HCT116 (cell line): ENCODE measurements at regions of chr4 and their contacts with region 1.

Region 1: DNA sequence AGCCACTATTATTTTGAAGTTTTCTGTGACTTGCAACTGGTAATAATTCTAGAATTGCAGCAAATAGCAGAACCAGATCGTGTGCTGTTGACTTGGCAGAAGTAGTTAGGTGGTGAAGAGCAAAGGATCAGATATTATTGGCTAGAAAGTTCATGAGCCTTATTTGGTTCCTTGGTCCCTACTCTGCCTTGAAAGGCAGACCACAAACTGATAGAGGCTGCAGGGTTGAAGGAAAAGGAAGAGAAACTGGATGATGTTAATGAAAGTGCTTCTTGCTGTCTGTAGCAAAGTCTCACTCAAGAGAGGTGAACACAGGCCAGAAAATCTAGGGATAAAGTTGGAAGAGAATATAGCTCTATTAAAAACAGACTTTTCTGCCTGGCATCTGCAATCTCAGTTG is 41.2 kb upstream of the RNF150 start:
- DNase-seq: no peak
- ATAC-seq: no peak
- H3K4me3 ChIP-seq: no peak overlapping the region
- H3K27ac ChIP-seq: no peak overlapping the region
- H3K4me1 ChIP-seq: no peaks in the 10 kb centered on the region
- H3K27me3 ChIP-seq: no peaks in the 10 kb centered on the region
- CTCF ChIP-seq: no peak
- POLR2A ChIP-seq: no peak
- RAD21 ChIP-seq: no peak

Region 2: GRCh38 chr4:142120921-142121320 is 946.5 kb after region 1 on chr4:
- CTCF ChIA-PET with region 1: no interaction called
- POLR2A ChIA-PET with region 1: no interaction called
- RAD21 ChIA-PET with region 1: no interaction called
- intact Hi-C with region 1: loop called (anchors 5 kb)
- DNase-seq: no peak
- ATAC-seq: no peak
- H3K4me3 ChIP-seq: no peak overlapping the region
- H3K27ac ChIP-seq: no peak overlapping the region
- H3K4me1 ChIP-seq: no peaks in the 10 kb centered on the region
- H3K27me3 ChIP-seq: no peaks in the 10 kb centered on the region
- CTCF ChIP-seq: no peak
- POLR2A ChIP-seq: no peak
- RAD21 ChIP-seq: no peak